SK-N-SH (cell line): ENCODE measurements at regions of chr2 and their contacts with region 1.

Region 1: GRCh38 chr2:47205576-47206141 is 50.6 kb upstream of the STPG4 start:
- DNase-seq: peak; percentile 77
- H3K4me3 ChIP-seq: no peak overlapping the region
- H3K27ac ChIP-seq: peak overlapping the region in 1 of 2 experiments; percentile 73; a peak in 2 of 4 replicates
- H3K4me1 ChIP-seq: peaks cover 11 to 30% of the 10 kb centered on the region in 2 experiments; a peak in 3 of 4 replicates
- H3K27me3 ChIP-seq: no peaks in the 10 kb centered on the region
- CTCF ChIP-seq: no peak
- EP300 ChIP-seq: peak in 1 of 2 experiments; percentile 78; a peak in 2 of 4 replicates
- RAD21 ChIP-seq: peak; percentile 37

Region 2: DNA sequence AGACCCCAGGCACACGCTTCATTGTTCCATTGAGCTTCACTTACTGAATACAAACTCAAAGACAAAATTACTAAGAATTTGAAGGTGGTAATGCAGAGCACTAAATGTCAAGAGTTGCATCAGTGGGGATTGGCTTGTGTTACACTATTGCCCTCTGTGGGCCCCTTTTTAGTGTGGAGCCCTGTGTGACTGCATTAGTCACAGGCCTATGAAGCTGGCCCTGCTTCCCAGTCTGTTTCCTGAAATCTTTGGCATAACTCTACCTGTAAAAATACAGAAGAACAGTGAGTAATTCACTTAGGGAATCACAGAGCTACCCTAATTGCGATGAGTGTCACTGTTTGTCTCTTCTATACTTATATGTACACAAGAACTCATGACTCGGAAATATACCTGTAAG is 10.5 kb before region 1 on chr2:
- CTCF ChIA-PET with region 1: interaction called, 11 read pairs
- POLR2A ChIA-PET with region 1: interaction called, 3 read pairs
- DNase-seq: no peak
- H3K4me3 ChIP-seq: no peak overlapping the region
- H3K27ac ChIP-seq: no peak overlapping the region
- H3K4me1 ChIP-seq: peaks cover 49 to 52% of the 10 kb centered on the region in 2 experiments
- H3K27me3 ChIP-seq: no peaks in the 10 kb centered on the region
- CTCF ChIP-seq: peak; percentile 27; the same call in 1 of the 2 replicates
- EP300 ChIP-seq: no peak
- RAD21 ChIP-seq: peak; percentile 34